ENCODE measurements at regions of chr22 and their contacts with region 1.

Region 1: GRCh38 chr22:37498289-37498909 is 12.2 kb upstream of the MFNG start:
- DNase-seq: peak; percentile 84
- ATAC-seq: peak; percentile 99
- H3K4me3 Mint-ChIP-seq: no peak overlapping the region
- H3K27ac Mint-ChIP-seq: no peak overlapping the region
- H3K4me1 Mint-ChIP-seq: peaks cover 18% of the 10 kb centered on the region
- H3K27me3 Mint-ChIP-seq: no peaks in the 10 kb centered on the region
- CTCF ChIP-seq: peak; percentile 92

Region 2: GRCh38 chr22:37472418-37473006 is 25.9 kb before region 1 on chr22:
- CTCF ChIA-PET with region 1: interaction called, 31 read pairs
- POLR2A ChIA-PET with region 1: no interaction called
- intact Hi-C with region 1: no loop called
- DNase-seq: peak; percentile 48
- ATAC-seq: no peak
- H3K4me3 Mint-ChIP-seq: no peak overlapping the region
- H3K27ac Mint-ChIP-seq: peak overlapping the region; percentile 42
- H3K4me1 Mint-ChIP-seq: peaks cover 5% of the 10 kb centered on the region
- H3K27me3 Mint-ChIP-seq: no peaks in the 10 kb centered on the region
- CTCF ChIP-seq: peak; percentile 70

Region 3: GRCh38 chr22:37486224-37486845 is 12.1 kb before region 1 on chr22 and contains the start of gene MFNG:
- CTCF ChIA-PET with region 1: interaction called, 24 read pairs
- POLR2A ChIA-PET with region 1: interaction called, 3 read pairs
- intact Hi-C with region 1: no loop called
- DNase-seq: peak; percentile 87
- ATAC-seq: peak; percentile 76
- H3K4me3 Mint-ChIP-seq: peak within 1 kb of the TSS; percentile 93
- H3K27ac Mint-ChIP-seq: peak within 1 kb of the TSS; percentile 97
- H3K4me1 Mint-ChIP-seq: peaks cover 51% of the 10 kb centered on the region
- H3K27me3 Mint-ChIP-seq: no peaks in the 10 kb centered on the region
- CTCF ChIP-seq: no peak
- total RNA-seq, gene MFNG: 155 to 160 TPM

Measured in activated CD8-positive, alpha-beta T cell treated with anti-CD3 and anti-CD28 coated beads for 36 hours (primary cell).